OCI-LY7 (cell line): ENCODE measurements at regions of chr5 and their contacts with region 1.

Region 1: DNA sequence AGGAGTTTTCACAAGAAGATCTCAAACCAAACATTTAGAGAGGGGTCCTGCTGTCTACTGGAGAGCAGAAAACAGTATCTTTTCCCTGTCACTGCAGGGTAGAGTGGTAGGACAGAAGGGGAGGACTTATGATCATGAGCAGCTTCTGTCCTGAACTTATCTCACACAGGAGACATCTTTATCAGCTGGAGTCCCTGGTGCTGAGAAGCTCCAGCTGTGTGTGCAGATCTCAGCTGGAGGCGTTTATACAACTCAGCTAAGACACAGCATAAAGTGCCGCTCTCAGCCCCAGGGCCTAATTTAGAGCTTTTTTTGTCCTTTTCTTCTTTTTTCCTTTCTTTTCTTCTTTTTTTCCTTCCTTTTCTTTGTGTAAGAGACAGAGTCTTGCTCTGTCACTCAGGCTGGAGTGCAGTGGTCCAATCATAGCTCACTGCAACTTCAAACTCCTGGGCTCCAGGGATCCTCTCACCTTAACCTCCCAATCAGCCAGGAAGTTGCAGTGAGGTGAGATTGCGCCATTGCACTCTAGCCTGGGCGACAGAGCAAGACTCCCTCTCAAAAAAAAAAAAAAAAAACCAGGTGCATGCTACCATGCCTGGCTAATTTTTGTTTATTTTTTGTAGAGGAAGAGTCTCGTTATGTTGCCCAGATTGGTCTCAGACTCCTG is 31.9 kb downstream of the CCDC125 start:
- DNase-seq: no peak
- H3K4me3 ChIP-seq: no peak overlapping the region
- H3K27ac ChIP-seq: no peak overlapping the region
- H3K4me1 ChIP-seq: no peaks in the 10 kb centered on the region
- CTCF ChIP-seq: no peak

Region 2: DNA sequence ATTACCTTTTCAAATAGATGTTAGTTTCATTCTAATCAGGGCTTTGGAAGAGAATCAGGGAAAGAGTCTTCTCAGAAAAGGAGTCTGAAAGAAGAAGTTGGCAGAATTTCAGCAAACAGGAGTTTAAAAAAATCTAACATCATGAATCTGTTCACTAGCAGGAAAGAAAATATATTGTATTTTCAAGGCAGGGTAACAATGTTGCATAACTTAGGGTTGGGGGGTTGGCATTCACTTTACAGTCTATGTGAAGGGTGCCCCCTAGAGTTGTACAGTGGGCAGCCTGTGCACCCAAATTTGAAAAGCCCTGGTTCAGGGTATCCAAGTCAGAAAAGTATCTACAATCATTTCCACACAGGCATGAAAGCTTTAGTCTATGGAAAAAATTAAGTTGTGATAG is 555.2 kb before region 1 on chr5:
- CTCF ChIA-PET with region 1: no interaction called
- POLR2A ChIA-PET with region 1: no interaction called
- intact Hi-C with region 1: no loop called
- DNase-seq: no peak
- H3K4me3 ChIP-seq: no peak overlapping the region
- H3K27ac ChIP-seq: no peak overlapping the region
- H3K4me1 ChIP-seq: no peaks in the 10 kb centered on the region
- CTCF ChIP-seq: peak; percentile 47; the same call in 1 of the 2 replicates

Region 3: DNA sequence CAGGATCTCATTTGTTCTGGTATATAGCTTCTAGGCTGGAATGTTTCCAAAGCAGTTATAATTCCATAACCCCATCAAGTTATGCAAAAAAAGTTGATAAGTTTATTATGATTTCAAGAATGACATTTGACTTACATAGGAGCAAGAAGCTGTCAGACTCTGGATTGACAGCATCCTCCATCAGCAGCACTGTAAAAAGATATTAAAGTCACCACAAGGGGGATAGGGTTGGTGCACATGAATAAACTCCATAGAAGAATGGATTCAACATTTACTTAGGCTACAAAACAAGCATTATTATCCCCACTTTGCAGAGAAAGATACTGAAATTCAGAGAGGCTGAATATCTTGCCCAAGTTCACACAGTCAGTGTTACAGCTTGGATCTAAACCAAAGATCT is 415.8 kb before region 1 on chr5:
- CTCF ChIA-PET with region 1: no interaction called
- POLR2A ChIA-PET with region 1: no interaction called
- intact Hi-C with region 1: no loop called
- DNase-seq: no peak
- H3K4me3 ChIP-seq: no peak overlapping the region
- H3K27ac ChIP-seq: no peak overlapping the region
- H3K4me1 ChIP-seq: no peaks in the 10 kb centered on the region
- CTCF ChIP-seq: peak; percentile 47; the same call in 1 of the 2 replicates

Region 4: DNA sequence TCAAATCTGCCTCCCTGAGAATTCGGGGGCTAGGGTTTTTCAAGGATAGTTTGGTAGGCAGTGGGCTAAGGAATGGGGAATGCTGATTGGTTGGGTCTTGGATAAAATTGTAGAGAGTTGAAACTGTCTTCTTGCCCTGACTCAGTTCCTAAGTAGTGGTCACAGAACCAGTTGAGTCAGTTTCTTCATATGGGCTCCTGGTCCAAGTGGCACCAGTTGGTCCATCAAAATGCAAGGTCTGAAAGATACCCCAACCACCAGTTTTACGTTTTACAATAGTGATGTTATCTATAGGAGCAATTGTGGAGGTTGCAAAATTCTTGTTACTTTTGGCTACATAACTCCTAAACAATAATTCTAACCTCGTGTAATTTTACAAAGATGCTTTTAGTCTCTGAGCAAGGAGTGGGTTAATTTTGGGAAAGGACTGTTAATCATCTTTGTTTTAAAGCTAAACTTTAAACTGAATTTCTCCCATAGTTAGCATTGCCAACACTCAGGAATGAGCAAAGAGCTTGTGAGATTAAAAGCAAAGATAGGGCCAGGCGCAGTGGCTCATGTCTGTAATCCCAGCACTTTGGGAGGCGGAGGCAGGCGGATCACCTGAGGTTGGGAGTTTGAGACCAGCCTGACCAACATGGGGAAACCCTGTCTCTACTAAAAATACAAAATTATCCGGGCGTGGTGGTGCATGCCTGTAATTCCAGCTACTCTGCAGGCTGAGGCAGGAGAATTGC is 58.3 kb before region 1 on chr5:
- CTCF ChIA-PET with region 1: no interaction called
- POLR2A ChIA-PET with region 1: no interaction called
- intact Hi-C with region 1: loop called (anchors 10 kb)
- DNase-seq: no peak
- H3K4me3 ChIP-seq: no peak overlapping the region
- H3K27ac ChIP-seq: no peak overlapping the region
- H3K4me1 ChIP-seq: no peaks in the 10 kb centered on the region
- CTCF ChIP-seq: no peak

Region 5: GRCh38 chr5:69334793-69335268 is 34.2 kb after region 1 on chr5:
- CTCF ChIA-PET with region 1: no interaction called
- POLR2A ChIA-PET with region 1: no interaction called
- intact Hi-C with region 1: no loop called
- DNase-seq: peak; percentile 82
- H3K4me3 ChIP-seq: no peak overlapping the region
- H3K27ac ChIP-seq: no peak overlapping the region
- H3K4me1 ChIP-seq: peaks cover 16% of the 10 kb centered on the region
- CTCF ChIP-seq: peak; percentile 80